GM12878 (cell line): ENCODE measurements at regions of chr17 and their contacts with region 1.

Region 1: DNA sequence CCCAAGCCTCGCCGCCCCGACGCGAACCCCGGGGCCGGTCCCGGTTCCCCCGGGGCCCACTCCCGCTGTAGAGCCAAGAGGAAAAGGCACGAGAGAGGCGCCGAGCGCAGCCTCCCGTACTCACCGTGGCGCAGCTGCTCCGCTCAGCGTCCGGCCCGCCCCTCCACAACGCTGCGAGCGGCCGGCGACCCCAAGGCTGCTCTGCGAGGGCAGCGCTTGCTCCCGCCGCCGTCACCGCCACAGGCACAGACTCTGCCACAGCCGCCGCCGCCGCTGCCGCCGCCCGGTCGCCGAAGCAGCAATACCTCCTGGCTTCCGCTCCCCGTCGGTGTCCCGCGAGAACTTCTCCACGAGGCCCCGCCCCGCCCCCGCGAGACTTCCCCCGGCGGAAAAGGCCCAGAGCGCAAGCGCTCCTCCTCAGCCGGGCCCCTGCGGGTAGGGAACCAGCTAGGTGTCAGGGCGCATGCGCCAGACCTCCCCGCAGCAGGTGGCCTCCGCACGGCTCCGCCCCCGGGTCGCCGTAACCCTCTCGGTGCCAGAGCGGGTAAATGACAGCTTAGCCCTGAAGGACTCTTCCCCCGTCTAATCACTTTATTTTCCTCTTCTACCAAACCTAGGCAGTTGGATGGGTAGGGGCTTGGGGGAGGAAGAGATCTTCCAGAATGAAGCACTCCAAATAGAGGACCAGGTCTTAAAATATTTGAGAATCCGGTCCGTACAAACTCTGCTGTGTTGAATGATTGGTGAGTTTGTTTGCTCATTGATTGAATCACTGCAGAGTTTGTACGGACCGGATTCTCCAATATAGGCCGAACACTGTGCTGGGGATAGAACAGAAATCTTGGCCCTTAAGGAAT is at the start of gene GRB2:
- DNase-seq: peak; percentile 83
- ATAC-seq: peak; percentile 82
- H3K4me3 ChIP-seq: peak within 1 kb of the TSS; percentile 87
- H3K27ac ChIP-seq: peak within 1 kb of the TSS; percentile 91
- H3K4me1 ChIP-seq: peaks cover 16% of the 10 kb centered on the region
- H3K27me3 ChIP-seq: no peaks in the 10 kb centered on the region
- CTCF ChIP-seq: no peak
- EP300 ChIP-seq: peak in 1 of 2 experiments; percentile 30; a peak in 1 of 4 replicates
- POLR2A ChIP-seq: peak; percentile 98
- RAD21 ChIP-seq: no peak
- polyA plus RNA-seq, gene GRB2: 113 to 152 TPM

Region 2: DNA sequence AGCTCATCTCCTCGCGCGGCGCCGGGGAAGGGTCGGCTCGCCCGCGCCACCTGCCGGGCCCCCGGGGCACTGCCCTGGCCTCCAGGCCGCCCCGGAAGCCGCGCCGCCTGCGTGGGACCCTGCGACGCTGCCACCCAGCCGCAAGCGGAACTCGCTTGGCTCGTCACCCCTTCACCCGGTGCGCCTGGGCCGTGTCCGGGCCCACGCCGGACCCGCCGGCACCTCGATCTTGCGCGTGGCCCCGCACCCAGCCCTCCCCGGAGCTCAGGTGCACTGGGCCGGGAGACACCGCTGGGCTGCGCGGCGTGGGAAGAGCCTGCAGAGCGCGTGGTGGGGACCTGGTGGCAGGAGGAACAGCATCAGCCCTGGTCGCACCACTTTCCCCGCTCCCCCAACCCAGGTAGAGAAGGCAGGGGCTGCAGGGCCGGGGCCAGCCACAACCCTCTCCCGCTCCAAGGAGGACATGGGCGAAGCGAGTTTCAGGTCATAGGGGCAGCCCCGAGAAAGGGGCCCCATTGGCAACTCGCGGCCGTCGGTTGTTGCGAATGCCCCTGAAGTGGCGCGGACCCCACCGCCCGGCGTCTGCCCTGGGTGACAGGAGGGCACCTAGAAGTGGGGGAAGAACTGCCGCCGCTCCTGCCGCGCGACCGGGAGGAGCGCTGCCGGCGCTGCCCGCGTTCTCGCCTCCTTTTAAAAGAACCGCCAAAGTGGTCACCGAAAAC is 134.2 kb before region 1 on chr17:
- CTCF ChIA-PET with region 1: interaction called, 11 read pairs
- POLR2A ChIA-PET with region 1: interaction called, 4 read pairs
- RAD21 ChIA-PET with region 1: interaction called, 11 read pairs
- SMC1A ChIA-PET with region 1: interaction called, 7 read pairs
- in situ Hi-C with region 1: loop called (anchors 5 kb)
- intact Hi-C with region 1: loop called (anchors 2 kb)
- DNase-seq: no peak
- ATAC-seq: peak; percentile 82
- H3K4me3 ChIP-seq: peak overlapping the region; percentile 70
- H3K27ac ChIP-seq: peak overlapping the region; percentile 91
- H3K4me1 ChIP-seq: peaks cover 24% of the 10 kb centered on the region
- H3K27me3 ChIP-seq: no peaks in the 10 kb centered on the region
- CTCF ChIP-seq: peak; percentile 66 to 87 (median 79); a peak in 4 of 6 replicates
- EP300 ChIP-seq: no peak
- POLR2A ChIP-seq: peak; percentile 79
- RAD21 ChIP-seq: peak; percentile 40; the same call in 1 of the 2 replicates

Region 3: DNA sequence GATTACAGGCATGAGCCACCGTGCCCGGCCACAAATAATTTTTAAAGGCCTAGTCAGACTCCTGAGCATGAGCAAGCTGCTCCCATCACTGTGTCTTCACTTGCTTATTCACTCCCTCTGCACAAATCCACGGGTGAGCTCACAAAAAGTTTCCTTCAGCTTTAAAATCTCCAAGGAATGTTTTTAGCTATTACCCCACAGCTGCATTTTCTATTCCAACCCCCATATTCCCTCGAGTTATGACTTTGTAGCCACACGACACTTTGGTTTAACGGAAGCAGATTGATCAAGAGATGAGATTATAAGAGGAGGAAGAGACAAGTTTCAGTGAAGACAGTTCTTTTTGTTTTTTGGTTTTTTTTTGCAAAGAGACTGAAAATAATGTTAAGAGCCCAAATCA is 67.3 kb before region 1 on chr17:
- CTCF ChIA-PET with region 1: interaction called, 6 read pairs
- POLR2A ChIA-PET with region 1: interaction called, 8 read pairs
- RAD21 ChIA-PET with region 1: interaction called, 23 read pairs
- SMC1A ChIA-PET with region 1: interaction called, 21 read pairs
- in situ Hi-C with region 1: no loop called
- intact Hi-C with region 1: no loop called
- DNase-seq: no peak
- ATAC-seq: peak; percentile 28
- H3K4me3 ChIP-seq: peak overlapping the region; percentile 40; the same call in 1 of the 2 replicates
- H3K27ac ChIP-seq: peak overlapping the region; percentile 36
- H3K4me1 ChIP-seq: peaks cover 44% of the 10 kb centered on the region
- H3K27me3 ChIP-seq: no peaks in the 10 kb centered on the region
- CTCF ChIP-seq: no peak
- EP300 ChIP-seq: no peak
- POLR2A ChIP-seq: no peak
- RAD21 ChIP-seq: no peak

Region 4: DNA sequence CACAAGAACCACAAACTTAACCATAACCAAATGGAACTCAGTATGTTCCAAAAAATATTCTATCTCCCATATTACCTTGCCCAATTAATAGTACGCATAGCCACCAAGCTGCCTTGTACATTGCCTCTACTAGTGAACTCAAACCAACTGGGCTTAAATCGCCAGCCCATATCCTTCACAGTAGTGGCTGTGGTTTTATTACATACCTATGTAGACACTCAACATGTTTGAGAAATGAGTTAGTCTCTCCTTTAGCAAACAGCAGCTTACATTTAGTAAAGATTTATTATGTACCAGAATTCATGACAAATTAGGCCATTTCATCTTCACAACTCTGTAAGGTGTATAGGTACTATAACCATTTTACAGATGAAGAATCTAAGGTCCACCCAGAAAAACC is 41.5 kb before region 1 on chr17:
- CTCF ChIA-PET with region 1: interaction called, 4 read pairs
- POLR2A ChIA-PET with region 1: interaction called, 6 read pairs
- RAD21 ChIA-PET with region 1: interaction called, 3 read pairs
- SMC1A ChIA-PET with region 1: interaction called, 6 read pairs
- in situ Hi-C with region 1: no loop called
- intact Hi-C with region 1: loop called (anchors 5 kb)
- DNase-seq: no peak
- ATAC-seq: no peak
- H3K4me3 ChIP-seq: no peak overlapping the region
- H3K27ac ChIP-seq: peak overlapping the region; percentile 54; the same call in 1 of the 2 replicates
- H3K4me1 ChIP-seq: peaks cover 64% of the 10 kb centered on the region
- H3K27me3 ChIP-seq: no peaks in the 10 kb centered on the region
- CTCF ChIP-seq: no peak
- EP300 ChIP-seq: no peak
- POLR2A ChIP-seq: no peak
- RAD21 ChIP-seq: no peak

Region 5: DNA sequence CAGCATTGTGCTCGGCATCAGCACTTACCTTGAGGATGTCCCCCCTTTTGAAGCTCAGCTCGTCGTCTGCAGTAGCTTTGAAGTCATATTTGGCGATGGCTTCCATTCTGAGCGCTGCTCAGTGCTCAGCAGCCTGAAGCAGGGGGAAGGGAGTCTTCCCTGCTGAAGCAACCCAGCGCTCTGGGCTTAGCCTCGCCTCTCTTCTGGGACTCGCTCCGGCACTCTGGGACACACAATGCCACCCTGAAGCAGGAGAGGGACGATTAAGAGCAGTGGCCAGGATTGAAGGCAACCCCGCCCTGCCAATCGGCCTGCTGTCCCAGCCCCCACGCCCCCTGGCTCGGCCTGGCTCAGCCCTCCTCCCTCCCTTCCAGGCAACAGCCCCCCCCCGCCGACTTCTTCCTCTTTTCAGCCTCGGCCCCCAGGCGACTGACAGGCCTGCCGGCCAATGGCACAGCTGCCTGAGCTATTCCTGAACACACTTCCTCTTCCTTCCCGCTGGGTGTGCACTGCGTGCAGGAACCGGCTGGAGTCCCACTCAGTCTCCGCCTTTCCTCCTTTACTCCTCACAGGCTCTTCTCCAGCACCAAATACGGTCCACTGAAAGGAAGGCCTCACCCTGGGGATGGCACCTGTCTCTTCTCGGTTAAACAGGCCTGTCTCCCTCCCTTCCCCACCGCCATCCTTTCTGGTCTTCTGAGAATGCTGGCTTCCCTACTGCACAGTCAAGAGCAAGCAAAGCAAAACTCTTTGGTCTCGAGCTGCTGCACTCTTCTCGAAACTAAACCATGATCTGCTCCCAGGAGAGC is 11.9 kb before region 1 on chr17:
- CTCF ChIA-PET with region 1: interaction called, 6 read pairs
- POLR2A ChIA-PET with region 1: interaction called, 11 read pairs
- RAD21 ChIA-PET with region 1: interaction called, 14 read pairs
- SMC1A ChIA-PET with region 1: interaction called, 7 read pairs
- in situ Hi-C with region 1: no loop called
- intact Hi-C with region 1: no loop called
- DNase-seq: peak; percentile 79
- ATAC-seq: peak; percentile 95
- H3K4me3 ChIP-seq: peak overlapping the region; percentile 77
- H3K27ac ChIP-seq: peak overlapping the region; percentile 57
- H3K4me1 ChIP-seq: peaks cover 21% of the 10 kb centered on the region
- H3K27me3 ChIP-seq: no peaks in the 10 kb centered on the region
- CTCF ChIP-seq: 0 out of 6 replicates have a peak, but pooled peaks of 1 of the 3 experiments have one; percentile 3
- EP300 ChIP-seq: no peak
- POLR2A ChIP-seq: peak; percentile 51; the same call in 1 of the 2 replicates
- RAD21 ChIP-seq: no peak